T-cell (primary cell): ENCODE measurements at regions of chr17 and their contacts with region 1.

Region 1: DNA sequence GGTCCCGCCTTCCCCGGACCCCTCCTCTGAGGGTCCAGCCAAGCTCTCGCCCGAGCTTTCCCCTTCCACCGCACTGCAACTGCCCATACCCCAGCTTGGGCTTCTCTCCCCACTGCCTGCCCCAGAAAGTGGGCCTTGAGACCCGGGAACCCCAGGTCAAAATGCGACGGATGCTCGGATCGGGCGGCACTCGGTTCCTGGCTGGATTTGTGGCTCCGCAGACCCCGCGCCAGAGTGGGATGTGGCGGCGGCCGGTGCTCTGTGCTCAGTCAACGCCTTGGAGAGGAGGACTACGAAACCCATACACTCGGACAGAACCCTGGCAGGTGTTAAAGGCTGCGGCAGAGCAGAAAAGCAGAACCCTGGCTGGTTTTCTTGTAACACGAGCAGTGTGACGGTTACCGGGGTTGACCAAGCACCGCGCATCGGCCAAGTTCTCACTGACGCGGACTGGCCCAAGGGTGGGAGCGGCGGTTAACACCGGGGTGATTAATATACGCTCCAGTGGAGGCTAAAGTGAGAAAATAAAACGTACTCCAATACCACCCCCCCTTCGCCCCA is 885 bp upstream of the SLFN13 start:
- DNase-seq: peak in 5 of 35 experiments; percentile 12 to 41 (median 19)
- ATAC-seq: no peak
- H3K4me3 ChIP-seq: no peak overlapping the region
- H3K4me3 Mint-ChIP-seq: peak overlapping the region; percentile 46 to 81 (median 80)
- H3K27ac ChIP-seq: no peak overlapping the region
- H3K27ac Mint-ChIP-seq: peak overlapping the region; percentile 52 to 58
- H3K4me1 ChIP-seq: peaks cover 6 to 20% of the 10 kb centered on the region in 2 experiments
- H3K4me1 Mint-ChIP-seq: peaks cover 16 to 24% (median 22%) of the 10 kb centered on the region in 3 donors
- H3K27me3 ChIP-seq: no peaks in the 10 kb centered on the region
- H3K27me3 Mint-ChIP-seq: no peaks in the 10 kb centered on the region

Region 2: DNA sequence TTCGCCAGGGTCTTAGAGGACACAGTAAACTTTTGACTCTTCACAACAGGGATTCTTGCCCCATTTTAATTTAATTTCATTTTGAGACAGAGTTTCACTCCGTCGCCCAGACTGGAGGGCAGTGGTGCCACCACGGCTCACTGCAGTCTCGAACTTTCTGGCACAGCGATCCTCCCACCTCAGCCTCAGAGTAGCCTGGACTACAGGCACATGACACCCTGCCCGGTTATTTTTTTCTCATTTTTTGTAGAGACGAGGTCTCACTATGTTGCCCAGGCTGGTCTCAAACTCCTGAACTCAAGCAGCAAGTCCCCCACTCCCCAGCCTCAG is 307.0 kb before region 1 on chr17:
- CTCF ChIA-PET with region 1: no interaction called
- POLR2A ChIA-PET with region 1: interaction called in 1 of 2 experiments, 16 read pairs
- DNase-seq: no peak
- ATAC-seq: peak in 1 of 4 experiments; percentile 22
- H3K4me3 ChIP-seq: peak overlapping the region; percentile 92 to 98
- H3K4me3 Mint-ChIP-seq: peak overlapping the region; percentile 71 to 84 (median 82)
- H3K27ac ChIP-seq: no peak overlapping the region
- H3K27ac Mint-ChIP-seq: peak overlapping the region; percentile 69 to 88
- H3K4me1 ChIP-seq: peaks cover 10 to 27% of the 10 kb centered on the region in 2 experiments
- H3K4me1 Mint-ChIP-seq: peaks cover 18 to 24% (median 19%) of the 10 kb centered on the region in 3 donors
- H3K27me3 ChIP-seq: no peaks in the 10 kb centered on the region
- H3K27me3 Mint-ChIP-seq: no peaks in the 10 kb centered on the region